Mucosa of descending colon (tissue), 3 donors: ENCODE measurements at regions of chr6 and their contacts with region 1.

Region 1: GRCh38 chr6:121430514-121431460 is 4.7 kb upstream of the GJA1 start:
- DNase-seq: peak in 1 of 3 donors; percentile 18
- ATAC-seq: no peak
- H3K4me3 ChIP-seq: no peak overlapping the region
- H3K4me1 ChIP-seq: peaks cover 5% of the 10 kb centered on the region
- CTCF ChIP-seq: no peak

Region 2: DNA sequence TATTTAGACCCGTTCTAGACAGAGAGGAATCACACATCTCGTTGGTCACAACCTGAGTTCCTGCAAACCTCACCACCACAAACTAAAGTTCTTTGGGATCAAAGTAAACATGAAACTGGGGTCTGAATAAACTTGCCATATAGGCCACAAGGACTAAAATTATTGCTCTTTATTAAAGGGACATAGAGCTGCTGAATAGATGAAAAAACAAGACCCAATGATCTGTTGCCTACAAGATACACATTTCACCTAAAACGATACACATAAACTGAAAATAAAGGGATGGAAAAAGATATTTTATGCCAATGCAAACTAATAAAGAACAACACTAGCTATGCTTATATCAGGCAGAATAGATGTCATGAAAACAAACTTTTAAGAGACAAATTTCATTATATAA is 719.5 kb before region 1 on chr6:
- intact Hi-C with region 1: no loop called
- DNase-seq: no peak
- ATAC-seq: no peak
- H3K4me3 ChIP-seq: no peak overlapping the region
- H3K4me1 ChIP-seq: no peaks in the 10 kb centered on the region
- CTCF ChIP-seq: no peak

Region 3: DNA sequence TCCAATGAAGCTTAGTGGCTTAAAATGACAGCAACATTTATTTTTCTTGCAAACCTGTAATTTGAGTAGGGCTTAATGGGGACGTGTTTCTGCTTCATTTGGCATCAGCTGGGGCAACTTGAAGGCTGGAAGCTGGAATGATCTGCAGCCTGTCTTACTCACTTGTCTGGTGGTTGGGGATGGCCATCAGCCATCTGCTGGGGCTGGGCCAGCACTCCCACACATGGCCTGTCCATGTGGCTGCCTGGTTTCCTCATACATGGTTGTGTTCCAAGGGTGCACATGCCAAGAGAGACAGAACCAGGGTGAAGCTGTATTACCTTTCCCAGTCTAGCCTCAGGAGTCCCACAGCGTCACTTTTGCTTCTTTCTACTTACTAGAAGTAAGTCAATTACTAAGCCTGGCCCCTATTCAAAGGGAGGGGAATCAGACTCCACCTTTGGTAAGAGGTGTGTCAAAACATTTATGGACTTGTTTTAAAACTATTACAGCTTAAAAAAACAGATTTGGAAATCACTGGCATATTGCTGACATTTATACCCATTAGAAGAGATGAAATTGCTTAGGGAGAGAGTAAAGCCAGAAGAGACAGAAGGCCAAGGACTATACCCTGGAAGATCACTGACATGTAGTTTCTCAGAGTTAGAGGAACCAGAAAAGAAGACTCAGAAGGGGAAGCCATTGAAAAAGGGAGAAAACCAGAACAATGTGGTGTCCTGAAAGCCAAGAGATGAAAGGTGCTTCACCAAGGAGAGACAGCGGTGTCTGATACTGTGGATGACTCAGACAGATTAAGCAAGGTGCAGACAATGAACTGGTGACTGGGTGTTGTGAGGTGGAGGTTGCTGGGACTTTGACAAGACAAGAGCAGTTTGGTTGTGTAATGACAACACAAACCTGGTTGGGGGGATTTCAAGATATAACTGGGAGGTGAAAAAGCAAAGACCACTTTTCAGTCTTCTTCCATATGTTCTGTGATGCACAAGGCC is 349.8 kb after region 1 on chr6:
- intact Hi-C with region 1: no loop called
- DNase-seq: peak in 2 of 3 donors; percentile 8 to 62
- ATAC-seq: peak; percentile 49
- H3K4me3 ChIP-seq: no peak overlapping the region
- H3K4me1 ChIP-seq: no peaks in the 10 kb centered on the region
- CTCF ChIP-seq: no peak

Region 4: GRCh38 chr6:121849477-121849876 is 418.7 kb after region 1 on chr6:
- intact Hi-C with region 1: loop called in 1 of 2 experiments (anchors 10 kb)
- DNase-seq: peak in 1 of 3 donors; percentile 41
- ATAC-seq: no peak
- H3K4me3 ChIP-seq: no peak overlapping the region
- H3K4me1 ChIP-seq: no peaks in the 10 kb centered on the region
- CTCF ChIP-seq: no peak

Region 5: DNA sequence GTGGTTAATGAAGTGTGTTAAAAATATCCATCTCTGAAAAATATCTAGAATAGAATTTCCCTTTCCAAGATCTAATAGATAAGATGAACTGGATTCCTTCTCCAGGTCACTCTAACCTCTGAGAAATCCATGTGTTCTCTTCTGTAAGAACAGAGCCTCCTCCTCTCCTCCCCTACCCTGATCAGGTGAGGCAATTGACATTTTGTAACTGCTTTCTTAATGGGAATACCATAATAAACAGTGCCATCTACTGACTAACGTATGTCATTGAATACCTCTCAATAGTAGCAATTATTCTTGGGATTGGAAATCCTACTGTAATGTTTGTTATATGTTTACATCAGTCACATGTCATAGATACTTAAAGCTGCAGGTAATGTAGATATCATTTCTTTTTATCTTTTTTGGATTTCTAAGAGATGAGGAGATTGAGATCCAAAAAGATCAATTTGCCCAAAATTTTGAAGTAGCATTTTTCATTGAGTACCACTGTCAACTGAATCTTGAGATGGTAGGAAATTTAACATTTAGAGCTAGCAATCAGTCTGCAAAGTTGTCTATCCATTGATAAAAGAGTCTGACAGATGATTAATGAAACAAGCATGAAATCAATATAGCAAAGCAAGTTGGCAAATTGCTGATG is 602.9 kb after region 1 on chr6:
- intact Hi-C with region 1: loop called (anchors 10 kb)
- DNase-seq: no peak
- ATAC-seq: peak; percentile 51
- H3K4me3 ChIP-seq: no peak overlapping the region
- H3K4me1 ChIP-seq: no peaks in the 10 kb centered on the region
- CTCF ChIP-seq: peak; percentile 13